ENCODE measurements at regions of chr2 and their contacts with region 1.

Region 1: DNA sequence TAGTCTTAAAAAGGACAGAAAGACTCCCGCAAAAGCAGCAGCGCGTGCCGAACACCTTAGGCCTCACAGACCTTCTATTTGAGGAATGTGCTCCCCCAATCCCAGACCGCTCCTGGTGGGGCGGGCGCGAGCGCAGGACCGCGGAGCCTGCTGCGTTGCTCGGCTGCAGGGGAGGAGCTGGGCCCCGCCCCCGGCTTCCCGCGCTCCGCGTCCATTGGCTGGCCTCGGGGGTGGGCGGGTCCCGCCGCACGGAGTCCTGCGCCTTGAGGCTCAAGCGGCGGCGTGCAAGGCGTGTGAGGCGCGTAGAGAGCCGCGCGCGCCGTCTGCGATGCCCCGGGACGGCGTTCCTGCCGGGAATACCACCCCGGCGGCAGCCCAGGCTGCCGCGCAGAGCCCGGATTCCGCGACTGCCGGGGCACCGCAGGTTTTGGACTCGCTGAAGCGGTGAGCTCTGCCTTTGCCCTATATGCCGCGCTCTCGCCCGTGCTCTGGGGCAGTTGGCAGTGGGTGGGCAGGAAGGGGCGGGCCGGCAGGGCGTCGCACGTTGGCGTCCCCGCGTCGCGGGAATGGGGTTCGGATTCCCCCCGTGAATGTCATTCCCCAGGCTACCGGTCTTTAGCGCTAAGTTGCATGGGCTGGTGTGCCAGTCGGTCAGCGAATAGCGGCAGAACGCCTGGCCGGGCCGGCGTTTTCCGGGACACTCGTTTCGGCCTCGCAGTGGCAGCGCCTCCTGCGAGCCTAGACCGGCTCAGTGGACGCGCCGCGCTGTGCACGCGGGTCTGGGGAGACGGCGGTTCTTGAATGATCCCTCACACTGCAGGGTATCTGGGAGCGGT is 49.6 kb upstream of the PAIP2B start:
- DNase-seq: peak; percentile 94
- ATAC-seq: peak; percentile 100
- H3K4me3 Mint-ChIP-seq: peak overlapping the region; percentile 67
- H3K27ac Mint-ChIP-seq: no peak overlapping the region
- H3K4me1 Mint-ChIP-seq: peaks cover 14% of the 10 kb centered on the region
- H3K27me3 Mint-ChIP-seq: peaks cover 76% of the 10 kb centered on the region

Region 2: GRCh38 chr2:71226965-71227560 is 49.5 kb before region 1 on chr2 and contains the start of gene PAIP2B:
- CTCF ChIA-PET with region 1: interaction called, 7 read pairs
- POLR2A ChIA-PET with region 1: interaction called, 3 read pairs
- intact Hi-C with region 1: loop called (anchors 1 kb)
- DNase-seq: peak; percentile 99
- ATAC-seq: peak; percentile 97
- H3K4me3 Mint-ChIP-seq: peak within 1 kb of the TSS; percentile 94
- H3K27ac Mint-ChIP-seq: peak within 1 kb of the TSS; percentile 85
- H3K4me1 Mint-ChIP-seq: peaks cover 15% of the 10 kb centered on the region
- H3K27me3 Mint-ChIP-seq: peaks cover 5% of the 10 kb centered on the region
- total RNA-seq, gene PAIP2B: 2.3 to 3.0 TPM